Gastrocnemius medialis (tissue), 4 donors: ENCODE measurements at regions of chr20 and their contacts with region 1.

Region 1: DNA sequence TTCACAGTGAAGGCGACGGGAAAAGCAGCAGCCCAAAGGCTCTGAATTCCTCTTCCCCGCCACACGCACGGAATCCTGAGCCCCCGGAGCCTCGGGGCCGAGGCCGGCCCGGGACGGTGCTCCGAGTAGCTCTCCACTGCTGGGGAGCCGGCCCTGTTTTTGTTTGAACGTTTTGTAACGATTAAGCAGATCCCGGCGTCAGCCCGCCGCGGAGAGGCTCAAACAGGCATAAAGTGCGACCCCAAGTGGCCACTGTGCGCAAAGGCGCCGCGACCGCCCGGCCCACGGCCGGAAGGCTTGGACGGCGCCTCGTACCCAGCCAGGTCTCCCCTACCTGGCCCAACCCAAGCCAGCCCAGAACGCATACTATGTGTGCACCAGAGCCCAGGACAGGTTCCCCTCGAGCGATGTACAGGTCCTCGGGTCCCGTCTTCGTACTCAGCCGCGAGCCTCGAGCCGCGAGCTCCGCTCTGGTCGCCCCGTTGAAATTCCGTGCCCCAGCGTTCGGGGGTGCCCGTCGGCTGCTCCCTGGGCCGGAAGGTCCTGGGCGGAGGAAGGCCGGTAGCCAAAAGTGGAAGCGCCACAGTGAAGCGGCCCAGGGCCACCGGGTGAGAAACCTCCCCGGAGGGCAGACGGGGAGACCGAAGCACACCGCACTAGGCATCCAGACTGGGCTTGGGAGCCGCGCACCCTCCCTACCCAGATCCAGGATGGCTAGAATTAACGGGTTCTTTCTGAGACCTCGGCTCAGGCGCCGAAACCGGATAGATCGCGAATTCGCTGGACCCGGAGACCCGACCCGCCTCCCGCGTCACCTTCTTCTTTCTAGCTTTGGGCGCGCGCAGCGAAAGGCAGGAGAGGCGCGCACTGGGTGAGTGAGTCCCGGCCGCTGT is 1.2 kb upstream of the MAFB start:
- DNase-seq: peak; percentile 83 to 86
- ATAC-seq: peak; percentile 62 to 64
- H3K4me3 ChIP-seq: peak overlapping the region; percentile 62 to 74 (median 70)
- H3K27ac ChIP-seq: peak overlapping the region; percentile 91 to 99 (median 96)
- H3K4me1 ChIP-seq: peaks cover 18 to 20% of the 10 kb centered on the region in 2 donors
- H3K27me3 ChIP-seq: peaks cover 12 to 25% (median 24%) of the 10 kb centered on the region in 3 donors
- CTCF ChIP-seq: peak; percentile 89 to 98 (median 95)
- POLR2A ChIP-seq: no peak

Region 2: GRCh38 chr20:39986173-39986904 is 703.9 kb before region 1 on chr20:
- in situ Hi-C with region 1: no loop called
- intact Hi-C with region 1: loop called (anchors 1 kb)
- DNase-seq: peak; percentile 94 to 96
- ATAC-seq: peak; percentile 98
- H3K4me3 ChIP-seq: peak overlapping the region in 3 of 4 donors; percentile 14 to 33 (median 32)
- H3K27ac ChIP-seq: peak overlapping the region; percentile 94 to 99 (median 96)
- H3K4me1 ChIP-seq: peaks cover 35 to 43% of the 10 kb centered on the region in 2 donors
- H3K27me3 ChIP-seq: no peaks in the 10 kb centered on the region
- CTCF ChIP-seq: no peak
- POLR2A ChIP-seq: peak; percentile 47 to 55

Region 3: GRCh38 chr20:40265825-40266533 is 424.2 kb before region 1 on chr20:
- in situ Hi-C with region 1: loop called in 2 of 4 experiments (anchors 10 to 25 kb)
- intact Hi-C with region 1: loop called (anchors 1 kb)
- DNase-seq: no peak
- ATAC-seq: peak; percentile 69 to 76
- H3K4me3 ChIP-seq: no peak overlapping the region
- H3K27ac ChIP-seq: no peak overlapping the region
- H3K4me1 ChIP-seq: peaks cover 0 to 3% of the 10 kb centered on the region in 2 donors
- H3K27me3 ChIP-seq: no peaks in the 10 kb centered on the region
- CTCF ChIP-seq: peak in 4 of 5 experiments; percentile 19 to 59 (median 47)
- POLR2A ChIP-seq: no peak

Region 4: DNA sequence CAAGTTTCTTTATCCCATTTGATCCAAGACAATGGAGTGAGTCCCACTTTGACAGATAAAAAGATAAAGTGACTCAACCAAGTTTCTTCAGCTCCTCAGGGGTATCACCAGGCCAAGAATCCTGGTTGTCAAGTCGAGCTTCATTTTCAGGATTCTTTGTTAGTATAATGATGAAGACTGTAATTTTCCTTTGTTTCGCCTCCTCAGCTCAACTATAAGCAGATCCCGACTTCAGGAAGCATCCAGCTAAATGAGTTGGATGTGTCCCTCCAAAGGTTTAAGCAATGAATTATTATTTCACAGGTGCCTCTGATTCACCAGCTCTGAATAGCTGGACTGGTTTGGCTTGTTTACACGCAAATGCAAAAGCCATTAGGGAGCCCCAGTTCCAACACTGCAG is 240.1 kb before region 1 on chr20:
- in situ Hi-C with region 1: no loop called
- intact Hi-C with region 1: loop called (anchors 5 kb)
- DNase-seq: peak in 1 of 2 donors; percentile 15
- ATAC-seq: peak; percentile 87 to 95
- H3K4me3 ChIP-seq: no peak overlapping the region
- H3K27ac ChIP-seq: no peak overlapping the region
- H3K4me1 ChIP-seq: peaks cover 14 to 17% of the 10 kb centered on the region in 2 donors
- H3K27me3 ChIP-seq: no peaks in the 10 kb centered on the region
- CTCF ChIP-seq: no peak
- POLR2A ChIP-seq: no peak

Region 5: GRCh38 chr20:42255821-42256220 is 1565.6 kb after region 1 on chr20:
- in situ Hi-C with region 1: no loop called
- intact Hi-C with region 1: no loop called
- DNase-seq: no peak
- ATAC-seq: no peak
- H3K4me3 ChIP-seq: no peak overlapping the region
- H3K27ac ChIP-seq: no peak overlapping the region
- H3K4me1 ChIP-seq: no peaks in the 10 kb centered on the region
- H3K27me3 ChIP-seq: no peaks in the 10 kb centered on the region
- CTCF ChIP-seq: no peak
- POLR2A ChIP-seq: no peak